PC-9 (cell line): ENCODE measurements at regions of chr4 and their contacts with region 1.

Region 1: GRCh38 chr4:38189445-38189844 is 229.2 kb downstream of the PTTG2 start:
- DNase-seq: peak; percentile 56 to 94
- H3K4me3 ChIP-seq: no peak overlapping the region; the same call in 1 of the 2 replicates
- H3K27ac ChIP-seq: peak overlapping the region; percentile 99
- H3K4me1 ChIP-seq: peaks cover 37% of the 10 kb centered on the region
- H3K27me3 ChIP-seq: no peaks in the 10 kb centered on the region
- CTCF ChIP-seq: no peak

Region 2: DNA sequence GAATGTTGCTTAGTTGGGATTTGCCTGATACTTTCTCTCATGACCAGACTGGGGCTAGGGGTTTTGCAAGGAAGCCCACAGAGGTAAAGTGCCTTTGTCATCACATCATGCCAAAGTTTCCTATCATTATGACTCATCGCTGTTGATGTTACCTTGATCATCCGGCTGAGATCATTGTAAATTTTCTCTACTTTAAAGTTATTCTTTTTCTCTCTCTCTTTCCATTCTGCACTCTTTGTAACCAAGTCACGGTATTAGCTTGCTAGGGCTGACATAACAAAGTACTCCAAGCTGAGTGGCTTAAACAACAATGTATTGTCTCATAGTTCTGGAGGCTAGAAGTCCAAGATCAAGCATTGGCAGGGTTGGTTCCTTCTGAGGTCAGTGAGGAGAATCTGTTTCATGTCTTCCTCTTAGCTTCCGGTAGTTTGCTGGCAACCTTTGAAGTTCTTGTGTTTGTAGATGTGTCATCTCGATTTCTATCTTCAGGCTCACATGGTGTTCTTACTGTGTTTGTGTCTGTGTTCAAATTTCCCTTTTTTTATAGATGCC is 1795.0 kb before region 1 on chr4:
- CTCF ChIA-PET with region 1: no interaction called
- POLR2A ChIA-PET with region 1: no interaction called
- intact Hi-C with region 1: no loop called
- DNase-seq: no peak
- H3K4me3 ChIP-seq: no peak overlapping the region
- H3K27ac ChIP-seq: no peak overlapping the region
- H3K4me1 ChIP-seq: no peaks in the 10 kb centered on the region
- H3K27me3 ChIP-seq: no peaks in the 10 kb centered on the region
- CTCF ChIP-seq: no peak

Region 3: DNA sequence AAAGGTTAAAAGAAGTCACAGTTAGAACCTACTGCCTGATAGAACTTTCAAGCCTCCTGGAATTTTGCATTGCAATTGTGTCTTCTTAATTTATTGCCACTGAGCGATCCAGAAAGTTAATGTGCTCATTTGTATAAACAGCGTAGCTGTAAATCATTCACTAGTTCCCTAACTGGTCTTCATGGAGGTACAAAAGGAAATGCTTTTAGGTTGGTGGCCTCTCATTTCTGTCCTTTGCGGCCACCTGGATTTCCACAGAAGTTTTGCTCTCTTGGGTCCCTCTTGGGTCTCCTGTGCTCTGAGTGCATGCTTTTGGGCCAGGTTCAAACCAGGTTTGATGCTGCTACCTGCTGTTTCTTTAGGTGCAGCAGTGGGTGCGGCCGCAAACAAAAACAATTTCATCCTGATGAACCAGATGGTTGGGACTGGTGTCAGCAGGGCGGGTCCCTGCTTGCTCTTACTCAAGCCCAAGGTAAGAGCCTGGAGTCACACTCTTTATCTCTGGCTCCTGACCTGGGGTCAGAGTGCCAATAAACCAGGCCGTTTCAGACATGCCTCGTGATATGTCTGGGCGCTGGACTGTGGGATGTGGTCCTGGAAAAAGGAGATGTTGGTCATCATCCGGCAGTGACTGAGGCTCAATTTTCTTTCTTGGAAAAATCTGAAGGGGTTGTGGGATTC is 40.8 kb after region 1 on chr4:
- CTCF ChIA-PET with region 1: no interaction called
- POLR2A ChIA-PET with region 1: no interaction called
- intact Hi-C with region 1: loop called (anchors 2 kb)
- DNase-seq: peak; percentile 73 to 95
- H3K4me3 ChIP-seq: peak overlapping the region; percentile 13; the same call in 1 of the 2 replicates
- H3K27ac ChIP-seq: peak overlapping the region; percentile 77
- H3K4me1 ChIP-seq: peaks cover 35% of the 10 kb centered on the region
- H3K27me3 ChIP-seq: no peaks in the 10 kb centered on the region
- CTCF ChIP-seq: no peak

Region 4: DNA sequence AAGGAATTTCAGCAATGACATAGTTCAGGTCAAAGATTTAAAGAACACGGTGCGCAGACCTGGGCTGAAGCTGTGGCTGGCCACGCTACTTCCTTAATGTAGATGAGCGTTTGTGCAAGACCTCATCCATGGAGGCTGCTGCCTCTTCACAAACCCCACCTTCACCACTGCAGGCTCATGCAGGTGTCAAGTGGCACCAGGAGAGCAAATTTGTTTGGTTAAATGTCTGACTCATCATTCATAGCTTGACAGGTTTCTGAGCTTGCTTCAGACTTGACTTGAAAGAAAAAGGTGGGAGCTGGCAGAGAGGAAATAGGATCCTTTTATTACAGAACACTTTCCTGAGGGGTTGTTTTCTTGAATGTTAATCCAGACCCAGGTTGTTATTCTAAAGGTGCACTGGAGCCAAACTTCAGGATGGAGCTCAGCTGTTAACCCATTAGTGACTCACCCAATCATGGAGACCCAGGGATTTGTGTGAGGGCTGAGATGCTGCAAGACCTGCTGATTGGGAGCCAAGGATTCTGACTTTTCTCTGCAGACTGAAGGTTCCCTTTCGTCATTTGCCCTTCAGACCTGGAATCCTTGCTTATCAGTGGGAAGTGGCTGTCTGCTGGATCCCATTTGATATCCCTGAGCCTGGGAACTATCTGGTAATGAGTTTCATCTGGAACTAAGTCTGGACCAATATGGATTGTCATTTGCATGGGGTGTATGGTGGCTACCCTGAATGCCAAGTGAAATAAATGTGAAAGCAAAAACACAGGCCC is 86.1 kb after region 1 on chr4:
- CTCF ChIA-PET with region 1: no interaction called
- POLR2A ChIA-PET with region 1: no interaction called
- intact Hi-C with region 1: loop called (anchors 1 kb)
- DNase-seq: peak; percentile 80 to 99
- H3K4me3 ChIP-seq: no peak overlapping the region
- H3K27ac ChIP-seq: peak overlapping the region; percentile 79
- H3K4me1 ChIP-seq: peaks cover 33% of the 10 kb centered on the region
- H3K27me3 ChIP-seq: no peaks in the 10 kb centered on the region
- CTCF ChIP-seq: no peak

Region 5: GRCh38 chr4:38308728-38309311 is 119.4 kb after region 1 on chr4:
- CTCF ChIA-PET with region 1: no interaction called
- POLR2A ChIA-PET with region 1: no interaction called
- intact Hi-C with region 1: loop called (anchors 2 kb)
- DNase-seq: peak in 1 of 2 experiments; percentile 77
- H3K4me3 ChIP-seq: no peak overlapping the region
- H3K27ac ChIP-seq: peak overlapping the region; percentile 52
- H3K4me1 ChIP-seq: peaks cover 36% of the 10 kb centered on the region
- H3K27me3 ChIP-seq: no peaks in the 10 kb centered on the region
- CTCF ChIP-seq: no peak

Region 6: GRCh38 chr4:38710053-38710452 is 520.6 kb after region 1 on chr4:
- CTCF ChIA-PET with region 1: no interaction called
- POLR2A ChIA-PET with region 1: no interaction called
- intact Hi-C with region 1: no loop called
- DNase-seq: no peak
- H3K4me3 ChIP-seq: no peak overlapping the region
- H3K27ac ChIP-seq: no peak overlapping the region
- H3K4me1 ChIP-seq: peaks cover 8% of the 10 kb centered on the region
- H3K27me3 ChIP-seq: no peaks in the 10 kb centered on the region
- CTCF ChIP-seq: no peak